ENCODE measurements at regions of chr7 and their contacts with region 1.

Region 1: GRCh38 chr7:39948956-39949928 is 814 bp upstream of the CDK13 start:
- DNase-seq: peak; percentile 99
- ATAC-seq: peak; percentile 82
- H3K4me3 Mint-ChIP-seq: peak overlapping the region; percentile 93
- H3K27ac Mint-ChIP-seq: peak overlapping the region; percentile 98
- H3K4me1 Mint-ChIP-seq: peaks cover 25% of the 10 kb centered on the region
- H3K27me3 Mint-ChIP-seq: no peaks in the 10 kb centered on the region

Region 2: GRCh38 chr7:38908759-38909335 is 1040.4 kb before region 1 on chr7 and contains the start of gene VPS41:
- CTCF ChIA-PET with region 1: no interaction called
- POLR2A ChIA-PET with region 1: no interaction called
- intact Hi-C with region 1: loop called in 1 of 2 experiments (anchors 5 kb)
- DNase-seq: peak; percentile 87
- ATAC-seq: peak; percentile 98
- H3K4me3 Mint-ChIP-seq: peak within 1 kb of the TSS; percentile 95
- H3K27ac Mint-ChIP-seq: peak within 1 kb of the TSS; percentile 81
- H3K4me1 Mint-ChIP-seq: peaks cover 31% of the 10 kb centered on the region
- H3K27me3 Mint-ChIP-seq: no peaks in the 10 kb centered on the region
- total RNA-seq, gene VPS41: 48.6 to 59.3 TPM

Region 3: GRCh38 chr7:39589323-39590111 is 359.7 kb before region 1 on chr7:
- CTCF ChIA-PET with region 1: no interaction called
- POLR2A ChIA-PET with region 1: no interaction called
- intact Hi-C with region 1: loop called in 1 of 2 experiments (anchors 2 kb)
- DNase-seq: peak; percentile 84
- ATAC-seq: peak; percentile 85
- H3K4me3 Mint-ChIP-seq: peak overlapping the region; percentile 30
- H3K27ac Mint-ChIP-seq: peak overlapping the region; percentile 43
- H3K4me1 Mint-ChIP-seq: peaks cover 36% of the 10 kb centered on the region
- H3K27me3 Mint-ChIP-seq: no peaks in the 10 kb centered on the region

Region 4: GRCh38 chr7:39987476-39988347 is 38.5 kb after region 1 on chr7:
- CTCF ChIA-PET with region 1: no interaction called
- POLR2A ChIA-PET with region 1: interaction called, 7 read pairs
- intact Hi-C with region 1: loop called (anchors 2 kb)
- DNase-seq: peak; percentile 28
- ATAC-seq: peak; percentile 63
- H3K4me3 Mint-ChIP-seq: peak overlapping the region; percentile 41
- H3K27ac Mint-ChIP-seq: peak overlapping the region; percentile 73
- H3K4me1 Mint-ChIP-seq: peaks cover 50% of the 10 kb centered on the region
- H3K27me3 Mint-ChIP-seq: no peaks in the 10 kb centered on the region

Region 5: DNA sequence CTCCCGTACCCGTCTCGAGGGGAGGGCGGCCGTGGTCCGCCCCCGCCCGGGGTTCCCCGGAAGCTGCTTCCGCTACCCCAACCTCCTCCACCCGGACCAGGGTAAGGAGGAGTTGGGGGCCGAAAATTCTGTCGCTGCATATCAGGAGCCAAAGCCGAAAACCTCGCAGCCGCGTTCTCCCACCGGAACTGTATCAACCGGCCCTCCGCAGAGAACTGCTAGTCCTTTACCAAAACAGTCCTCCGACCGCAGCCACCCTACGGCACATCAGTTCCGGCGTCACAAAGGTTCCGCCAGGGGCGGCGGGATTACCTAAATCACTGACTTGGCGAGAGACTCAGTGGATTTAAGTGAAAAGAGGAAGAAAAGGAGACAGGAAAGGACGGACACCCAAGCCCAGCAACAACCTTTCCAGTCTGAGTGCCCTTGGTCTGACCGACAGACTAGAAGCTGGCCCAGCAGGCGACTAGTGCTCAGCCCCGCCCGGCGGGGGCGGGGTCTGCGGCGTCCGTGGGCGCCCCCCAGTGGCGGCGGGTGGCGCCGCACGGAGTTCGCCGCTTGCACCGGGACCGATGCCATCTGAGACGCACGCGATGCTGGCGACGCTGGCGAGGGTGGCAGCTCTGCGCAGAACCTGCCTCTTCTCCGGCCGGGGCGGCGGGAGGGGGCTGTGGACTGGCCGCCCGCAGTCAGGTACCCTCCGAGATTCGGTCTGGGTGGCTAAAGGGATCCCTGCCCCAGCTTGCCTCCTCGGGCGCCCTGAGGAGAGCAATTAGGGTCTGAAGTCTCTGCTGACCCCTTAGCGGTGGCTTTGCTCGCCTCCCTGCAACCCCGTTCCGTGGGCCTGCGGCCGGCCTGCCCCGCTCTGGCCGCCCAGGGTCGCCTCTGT is 185.4 kb after region 1 on chr7 and contains the starts of genes MPLKIP and SUGCT:
- CTCF ChIA-PET with region 1: interaction called, 3 read pairs
- POLR2A ChIA-PET with region 1: no interaction called
- intact Hi-C with region 1: loop called (anchors 1 kb)
- DNase-seq: peak; percentile 90
- ATAC-seq: peak; percentile 86
- H3K4me3 Mint-ChIP-seq: peak within 1 kb of the TSS; percentile 80
- H3K27ac Mint-ChIP-seq: peak within 1 kb of the TSS; percentile 92
- H3K4me1 Mint-ChIP-seq: peaks cover 28% of the 10 kb centered on the region
- H3K27me3 Mint-ChIP-seq: peaks cover 3% of the 10 kb centered on the region
- total RNA-seq, gene MPLKIP: 28.5 to 35.2 TPM
- total RNA-seq, gene SUGCT: 1.2 to 1.9 TPM

Region 6: DNA sequence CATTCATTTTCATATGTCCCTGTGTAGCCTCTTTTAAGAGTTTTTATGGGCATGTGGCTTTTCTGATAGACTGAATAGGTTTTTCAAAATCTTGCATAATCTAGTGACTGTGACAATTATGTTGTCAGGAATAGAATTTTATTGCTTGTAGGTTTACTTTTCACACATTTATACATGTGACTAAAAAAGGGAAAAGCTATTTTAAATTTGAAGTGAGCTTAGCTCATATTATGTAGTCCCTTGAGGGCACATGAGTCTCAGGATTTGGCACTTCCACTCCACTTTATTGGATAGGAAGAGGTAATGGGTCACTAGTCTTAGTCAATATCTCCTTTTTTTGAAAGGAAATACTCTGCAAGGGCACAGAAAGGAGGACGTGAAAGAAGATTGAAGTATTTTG is 432.9 kb after region 1 on chr7:
- CTCF ChIA-PET with region 1: no interaction called
- POLR2A ChIA-PET with region 1: no interaction called
- intact Hi-C with region 1: no loop called
- DNase-seq: no peak
- ATAC-seq: no peak
- H3K4me3 Mint-ChIP-seq: no peak overlapping the region
- H3K27ac Mint-ChIP-seq: no peak overlapping the region
- H3K4me1 Mint-ChIP-seq: no peaks in the 10 kb centered on the region
- H3K27me3 Mint-ChIP-seq: no peaks in the 10 kb centered on the region

Measured in activated CD4-positive, alpha-beta T cell treated with anti-CD3 and anti-CD28 coated beads for 36 hours (primary cell).